Activated CD4-positive, alpha-beta memory T cell treated with anti-CD3 and anti-CD28 coated beads for 36 hours (primary cell): ENCODE measurements at regions of chr19 and their contacts with region 1.

Region 1: GRCh38 chr19:45336696-45337251 is 3.8 kb upstream of the KLC3 start:
- DNase-seq: no peak
- H3K4me3 Mint-ChIP-seq: no peak overlapping the region
- H3K27ac Mint-ChIP-seq: no peak overlapping the region
- H3K4me1 Mint-ChIP-seq: peaks cover 4% of the 10 kb centered on the region
- H3K27me3 Mint-ChIP-seq: peaks cover 15% of the 10 kb centered on the region

Region 2: DNA sequence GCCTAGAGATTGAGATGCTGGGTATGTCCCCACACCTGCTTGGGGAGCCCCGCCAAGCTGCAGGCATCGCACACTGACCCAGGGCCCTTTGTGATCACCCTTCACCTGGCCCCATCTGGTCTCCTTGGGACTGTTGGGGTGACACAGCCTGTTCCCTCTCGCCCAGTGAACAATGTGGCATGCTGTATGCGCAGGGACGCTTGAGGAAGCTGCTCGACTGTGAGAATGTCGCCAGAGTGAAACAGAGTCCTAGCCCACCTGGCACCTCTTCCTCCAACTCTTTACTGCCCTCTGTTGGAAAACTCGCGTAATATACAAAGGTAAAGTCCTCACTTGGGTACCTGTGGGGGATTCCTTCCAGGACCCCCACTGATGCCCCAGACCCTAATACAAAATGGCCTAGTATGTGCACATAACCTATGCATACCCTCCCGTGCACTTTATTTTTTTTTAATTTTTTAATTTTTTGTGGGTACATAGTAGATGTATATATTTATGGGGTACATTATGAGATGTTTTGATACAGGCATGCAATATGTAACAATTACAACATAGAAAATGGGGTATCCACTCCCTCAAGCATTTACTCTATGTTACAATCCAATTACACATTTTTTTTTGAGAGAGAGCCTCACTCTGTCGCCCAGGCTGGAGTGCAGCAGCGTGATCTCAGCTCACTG is 149.2 kb before region 1 on chr19:
- CTCF ChIA-PET with region 1: interaction called, 11 read pairs
- POLR2A ChIA-PET with region 1: no interaction called
- intact Hi-C with region 1: loop called (anchors 5 kb)
- DNase-seq: peak; percentile 36
- H3K4me3 Mint-ChIP-seq: no peak overlapping the region
- H3K27ac Mint-ChIP-seq: no peak overlapping the region
- H3K4me1 Mint-ChIP-seq: peaks cover 4% of the 10 kb centered on the region
- H3K27me3 Mint-ChIP-seq: no peaks in the 10 kb centered on the region

Region 3: DNA sequence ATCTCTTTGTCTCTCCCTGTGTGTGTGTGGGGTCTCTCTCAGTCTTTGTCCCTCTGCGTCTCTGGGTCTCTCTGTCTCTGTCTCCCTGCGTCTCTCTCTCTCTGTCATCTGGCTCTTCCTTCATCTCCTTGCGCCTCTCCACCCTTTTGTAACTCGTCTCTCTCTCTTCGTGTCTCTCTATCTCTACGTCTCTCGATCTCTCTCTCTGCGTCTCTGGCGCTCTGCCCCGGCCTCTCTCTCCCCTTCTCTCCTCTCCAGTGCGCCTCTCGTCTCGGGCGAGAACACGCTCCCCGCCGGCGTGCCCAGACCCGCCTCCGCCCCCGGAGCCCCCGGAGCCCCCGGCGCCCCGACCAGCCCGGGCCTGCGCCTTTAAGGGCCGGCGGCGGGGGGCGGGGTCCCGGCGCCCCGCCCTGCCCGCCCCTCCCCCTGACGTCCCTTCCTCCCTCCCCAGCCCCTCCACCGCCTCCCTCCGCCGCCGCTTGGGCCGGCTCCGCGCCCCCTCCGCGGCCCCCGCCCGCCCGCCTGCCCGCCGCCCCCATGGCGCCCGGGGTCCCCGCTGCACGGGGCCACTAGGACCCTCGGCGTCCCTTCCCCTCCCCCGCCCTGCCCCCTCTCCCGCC is 85.8 kb before region 1 on chr19 and contains the start of gene MARK4:
- CTCF ChIA-PET with region 1: interaction called, 5 read pairs
- POLR2A ChIA-PET with region 1: no interaction called
- intact Hi-C with region 1: loop called (anchors 5 kb)
- DNase-seq: peak; percentile 66
- H3K4me3 Mint-ChIP-seq: peak within 1 kb of the TSS; percentile 74
- H3K27ac Mint-ChIP-seq: no peak within 1 kb of the TSS
- H3K4me1 Mint-ChIP-seq: peaks cover 28% of the 10 kb centered on the region
- H3K27me3 Mint-ChIP-seq: peaks cover 3% of the 10 kb centered on the region
- total RNA-seq, gene MARK4: 20.3 to 21.6 TPM

Region 4: DNA sequence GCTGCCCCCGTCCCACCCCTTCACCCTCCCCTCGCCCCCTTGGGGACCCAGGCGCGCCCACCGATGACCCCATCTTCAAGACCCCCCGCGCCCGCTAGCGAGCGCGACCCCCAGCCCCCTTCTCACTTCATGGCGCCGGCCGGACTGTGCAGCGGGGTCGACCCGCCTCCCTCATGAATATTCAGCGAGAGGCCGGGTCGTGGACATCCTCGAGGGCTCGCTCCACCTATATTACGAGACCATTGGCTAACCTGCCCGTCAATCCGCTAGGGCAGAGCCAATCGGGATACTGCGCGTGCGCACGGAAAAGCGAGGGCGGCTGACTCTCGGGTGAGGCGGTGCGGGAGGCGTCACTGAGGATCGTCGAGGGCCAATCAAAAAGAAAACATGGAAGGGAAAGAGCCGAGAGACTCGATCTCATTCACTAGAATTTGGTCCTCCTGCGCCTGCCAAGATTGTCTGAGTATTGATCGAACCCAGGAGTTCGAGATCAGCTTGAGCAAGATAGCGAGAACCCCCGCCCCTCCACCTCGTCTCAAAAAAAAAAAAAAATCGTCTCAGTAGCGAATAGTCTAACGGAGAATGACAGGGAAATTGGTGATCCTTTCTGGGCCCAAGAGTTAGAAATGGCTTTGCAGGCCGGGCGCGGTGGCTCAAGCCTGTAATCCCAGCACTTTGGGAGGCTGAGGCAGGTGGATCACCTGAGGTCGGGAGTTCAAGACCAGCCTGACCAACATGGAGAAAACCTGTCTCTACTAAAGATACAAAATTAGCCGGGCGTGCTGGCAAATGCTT is 33.8 kb after region 1 on chr19 and contains the start of gene ERCC2:
- CTCF ChIA-PET with region 1: no interaction called
- POLR2A ChIA-PET with region 1: no interaction called
- intact Hi-C with region 1: no loop called
- DNase-seq: peak; percentile 100
- H3K4me3 Mint-ChIP-seq: peak within 1 kb of the TSS; percentile 85
- H3K27ac Mint-ChIP-seq: peak within 1 kb of the TSS; percentile 96
- H3K4me1 Mint-ChIP-seq: peaks cover 8% of the 10 kb centered on the region
- H3K27me3 Mint-ChIP-seq: peaks cover 2% of the 10 kb centered on the region
- total RNA-seq, gene ERCC2: 27.2 to 27.4 TPM